WTC11 (cell line): ENCODE measurements at regions of chr3 and their contacts with region 1.

Region 1: GRCh38 chr3:127959846-127960245 is 44.8 kb downstream of the KBTBD12 start:
- DNase-seq: peak; percentile 48
- ATAC-seq: peak; percentile 94
- H3K4me3 Mint-ChIP-seq: no peak overlapping the region
- H3K27ac Mint-ChIP-seq: no peak overlapping the region
- H3K4me1 Mint-ChIP-seq: 0 out of 2 replicates have a peak, but pooled peaks cover 3% of the 10 kb centered on the region
- H3K27me3 Mint-ChIP-seq: no peaks in the 10 kb centered on the region
- CTCF ChIP-seq: no peak

Region 2: DNA sequence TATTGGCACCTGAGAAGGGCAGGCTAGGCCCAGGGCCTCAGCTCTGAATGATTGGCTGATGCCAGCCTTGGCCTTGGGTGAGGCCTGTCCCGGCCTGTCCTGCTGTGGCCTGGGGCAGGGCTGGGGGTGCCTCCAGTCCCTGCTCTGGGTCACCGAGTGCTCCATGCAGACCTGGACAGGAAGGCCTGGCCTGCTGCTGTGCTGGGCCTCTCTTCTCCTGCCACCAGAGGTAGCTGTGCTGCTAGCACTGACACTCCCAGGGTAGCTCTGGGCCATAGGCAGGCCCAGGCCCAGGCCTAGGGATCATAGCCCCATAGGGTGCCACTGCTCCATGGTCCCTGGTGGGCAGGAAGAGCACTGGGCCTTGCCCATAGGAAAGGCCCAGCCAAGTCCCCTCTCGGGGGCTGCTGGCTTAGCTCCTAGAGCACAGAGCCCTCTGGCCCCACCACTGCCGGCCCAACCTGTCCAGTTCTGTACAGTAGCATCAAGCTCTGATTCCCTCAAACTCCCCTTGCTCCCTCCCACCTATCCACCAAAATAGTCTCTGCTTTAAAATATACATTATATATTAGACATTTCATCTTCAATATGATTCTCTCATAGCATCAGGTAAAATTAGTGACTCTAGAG is 268.9 kb before region 1 on chr3:
- CTCF ChIA-PET with region 1: interaction called, 12 read pairs
- POLR2A ChIA-PET with region 1: no interaction called
- DNase-seq: peak; percentile 71
- ATAC-seq: peak; percentile 94
- H3K4me3 Mint-ChIP-seq: no peak overlapping the region
- H3K27ac Mint-ChIP-seq: no peak overlapping the region
- H3K4me1 Mint-ChIP-seq: peaks cover 19% of the 10 kb centered on the region
- H3K27me3 Mint-ChIP-seq: no peaks in the 10 kb centered on the region
- CTCF ChIP-seq: no peak

Region 3: DNA sequence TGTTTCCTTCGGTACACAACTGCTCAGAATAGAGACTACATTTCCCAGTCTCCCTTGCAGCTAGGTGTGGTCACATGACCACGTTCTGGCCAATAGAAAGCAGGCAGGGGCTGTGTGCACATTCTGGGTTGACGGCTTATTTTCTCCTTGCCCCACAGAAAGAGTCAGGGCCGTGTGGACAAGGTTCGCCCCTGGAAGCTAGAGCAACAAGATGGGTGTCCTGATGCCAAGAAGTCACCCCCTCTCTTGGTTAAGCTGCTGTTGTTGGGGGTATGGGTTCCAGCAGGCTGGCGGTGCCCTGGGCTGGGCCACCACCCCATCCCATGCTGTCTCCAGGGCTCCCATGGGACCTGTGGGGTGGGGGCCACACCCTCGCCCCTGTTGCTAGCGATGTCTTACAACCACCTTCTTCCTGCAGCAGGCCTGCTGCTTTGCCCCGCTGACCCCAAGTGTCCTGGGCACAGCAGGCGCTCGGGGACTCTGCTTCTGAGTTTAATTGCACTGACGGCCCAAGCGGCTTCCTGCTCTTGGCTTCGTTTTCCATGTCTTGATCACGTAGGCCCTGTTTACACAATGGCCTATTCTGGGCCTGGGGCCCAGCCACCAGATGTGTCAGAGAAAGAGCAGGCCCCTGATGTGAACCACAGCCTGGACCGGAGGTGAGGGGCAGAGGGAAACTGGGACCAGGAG is 262.1 kb before region 1 on chr3:
- CTCF ChIA-PET with region 1: interaction called, 10 read pairs
- POLR2A ChIA-PET with region 1: no interaction called
- DNase-seq: peak; percentile 64
- ATAC-seq: peak; percentile 67
- H3K4me3 Mint-ChIP-seq: peak overlapping the region; percentile 39
- H3K27ac Mint-ChIP-seq: no peak overlapping the region
- H3K4me1 Mint-ChIP-seq: no peaks in the 10 kb centered on the region; the same call in 1 of the 2 replicates
- H3K27me3 Mint-ChIP-seq: no peaks in the 10 kb centered on the region
- CTCF ChIP-seq: no peak

Region 4: GRCh38 chr3:127791211-127791946 is 168.5 kb before region 1 on chr3:
- CTCF ChIA-PET with region 1: interaction called, 15 read pairs
- POLR2A ChIA-PET with region 1: no interaction called
- DNase-seq: peak; percentile 49
- ATAC-seq: peak; percentile 95
- H3K4me3 Mint-ChIP-seq: no peak overlapping the region
- H3K27ac Mint-ChIP-seq: no peak overlapping the region
- H3K4me1 Mint-ChIP-seq: peaks cover 16% of the 10 kb centered on the region
- H3K27me3 Mint-ChIP-seq: no peaks in the 10 kb centered on the region
- CTCF ChIP-seq: no peak

Region 5: DNA sequence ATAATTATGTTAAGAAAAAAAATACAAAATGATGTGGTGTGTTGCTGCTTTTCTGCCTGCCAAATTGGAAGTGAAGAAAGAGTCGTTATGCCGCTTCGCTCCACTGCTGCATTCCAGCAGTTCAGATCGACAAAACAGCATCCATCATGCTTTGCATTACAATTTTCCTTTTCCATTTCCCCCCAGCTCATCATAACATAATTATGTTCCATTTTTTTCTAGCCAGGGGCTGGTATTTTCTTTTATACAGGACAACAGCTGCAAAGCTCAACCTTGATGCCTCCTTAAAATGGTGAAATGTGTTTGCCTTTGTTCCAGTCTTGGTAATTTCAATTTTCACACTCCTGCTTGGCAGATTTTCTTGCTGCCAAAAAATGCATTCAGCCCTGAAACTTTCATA is 89.7 kb before region 1 on chr3:
- CTCF ChIA-PET with region 1: interaction called, 10 read pairs
- POLR2A ChIA-PET with region 1: no interaction called
- DNase-seq: no peak
- ATAC-seq: no peak
- H3K4me3 Mint-ChIP-seq: no peak overlapping the region
- H3K27ac Mint-ChIP-seq: no peak overlapping the region
- H3K4me1 Mint-ChIP-seq: peaks cover under 1% of the 10 kb centered on the region
- H3K27me3 Mint-ChIP-seq: peaks cover 3% of the 10 kb centered on the region; the same call in 1 of the 2 replicates
- CTCF ChIP-seq: no peak